Mucosa of descending colon (tissue), 3 donors: ENCODE measurements at regions of chr3 and their contacts with region 1.

Region 1: GRCh38 chr3:27484015-27484844 is at the start of gene SLC4A7:
- DNase-seq: peak; percentile 99
- ATAC-seq: peak; percentile 98
- H3K4me3 ChIP-seq: peak within 1 kb of the TSS; percentile 75
- H3K4me1 ChIP-seq: no peaks in the 10 kb centered on the region
- CTCF ChIP-seq: no peak
- total RNA-seq, gene SLC4A7: 21.2 to 43.3 (median 22.7) TPM

Region 2: DNA sequence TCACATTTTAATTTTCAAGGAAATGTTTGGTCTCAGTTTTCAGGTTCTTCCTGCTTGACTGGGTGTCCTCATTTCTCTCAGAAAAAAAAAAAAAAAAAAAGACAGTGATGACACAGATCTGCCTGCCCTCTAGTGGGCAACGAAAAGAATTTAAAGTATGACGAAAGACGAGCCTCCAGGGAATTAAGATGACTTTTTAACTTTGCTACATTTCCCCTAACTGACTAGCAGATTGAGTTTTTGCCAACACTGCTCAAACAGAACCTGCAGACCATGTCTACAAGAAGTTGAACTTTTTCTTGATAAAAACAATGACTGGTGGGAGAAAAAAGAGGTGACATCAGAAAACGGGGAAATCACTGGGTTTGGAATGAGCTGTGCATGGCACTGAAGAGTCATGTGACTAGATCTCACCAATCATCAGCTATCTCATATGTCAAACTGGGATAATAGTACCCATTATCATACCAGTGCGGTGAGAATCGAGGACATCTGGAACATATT is 197.1 kb after region 1 on chr3:
- intact Hi-C with region 1: loop called in 1 of 2 experiments (anchors 10 kb)
- DNase-seq: peak in 1 of 3 donors; percentile 37
- ATAC-seq: peak; percentile 87
- H3K4me3 ChIP-seq: no peak overlapping the region
- H3K4me1 ChIP-seq: no peaks in the 10 kb centered on the region
- CTCF ChIP-seq: peak; percentile 41

Region 3: GRCh38 chr3:27888562-27888961 is 404.3 kb after region 1 on chr3:
- intact Hi-C with region 1: no loop called
- DNase-seq: no peak
- ATAC-seq: no peak
- H3K4me3 ChIP-seq: no peak overlapping the region
- H3K4me1 ChIP-seq: no peaks in the 10 kb centered on the region
- CTCF ChIP-seq: no peak